HCT116 (cell line): ENCODE measurements at regions of chr17 and their contacts with region 1.

Region 1: GRCh38 chr17:55750750-55751657 is at the start of gene PCTP:
- DNase-seq: peak; percentile 86
- ATAC-seq: peak; percentile 98
- H3K4me3 ChIP-seq: peak within 1 kb of the TSS; percentile 71 to 87
- H3K27ac ChIP-seq: peak within 1 kb of the TSS; percentile 74
- H3K4me1 ChIP-seq: peaks cover 11 to 14% of the 10 kb centered on the region in 2 experiments; a peak in 3 of 4 replicates
- H3K27me3 ChIP-seq: no peaks in the 10 kb centered on the region
- CTCF ChIP-seq: peak in 2 of 3 experiments; percentile 52 to 54; a peak in 4 of 6 replicates
- POLR2A ChIP-seq: no peak
- RAD21 ChIP-seq: no peak
- total RNA-seq, gene PCTP: 16.3 TPM

Region 2: DNA sequence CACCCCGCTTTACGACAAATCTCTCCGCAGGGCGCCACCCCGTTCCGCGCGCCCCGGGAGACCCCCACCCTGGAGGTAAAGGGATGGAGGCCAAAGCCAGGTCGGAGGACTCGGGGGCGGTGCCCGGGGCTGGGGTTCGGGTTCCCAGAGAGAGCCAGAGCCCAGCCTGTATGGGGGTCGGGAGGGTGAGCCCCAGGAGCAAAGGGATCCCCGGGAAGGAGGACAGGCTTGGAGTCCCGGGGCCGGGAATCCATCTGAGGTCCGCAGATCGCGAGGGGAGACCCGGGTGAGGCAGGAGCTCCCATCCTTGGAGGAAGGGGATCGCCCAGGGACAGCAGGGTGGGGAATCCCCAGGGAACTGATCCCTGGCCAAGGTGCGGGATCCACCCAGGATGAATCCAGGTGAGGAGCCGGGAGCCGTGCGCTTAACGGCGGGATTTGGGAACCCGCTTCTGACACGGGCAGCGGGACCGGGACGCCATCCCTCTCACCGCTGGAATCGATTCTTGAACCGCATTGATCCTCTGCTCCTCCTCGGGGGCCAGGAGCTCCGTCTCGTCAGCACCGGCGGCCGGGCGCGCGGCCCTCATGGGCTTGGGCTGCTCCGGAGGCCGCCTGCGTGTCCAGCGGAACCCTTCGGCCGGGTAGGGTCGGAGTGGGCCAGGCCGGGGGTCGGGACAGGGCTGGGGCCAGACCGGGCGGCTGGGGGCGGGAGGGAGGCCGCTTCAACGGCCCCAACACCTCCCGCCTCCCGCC is 329.6 kb before region 1 on chr17 and contains the start of gene MMD:
- CTCF ChIA-PET with region 1: no interaction called
- POLR2A ChIA-PET with region 1: no interaction called
- RAD21 ChIA-PET with region 1: no interaction called
- intact Hi-C with region 1: loop called (anchors 5 kb)
- DNase-seq: no peak
- ATAC-seq: peak; percentile 51
- H3K4me3 ChIP-seq: peak within 1 kb of the TSS; percentile 81 to 82
- H3K27ac ChIP-seq: peak within 1 kb of the TSS; percentile 49
- H3K4me1 ChIP-seq: peaks cover 8 to 22% of the 10 kb centered on the region in 2 experiments; a peak in 3 of 4 replicates
- H3K27me3 ChIP-seq: peaks cover 24% of the 10 kb centered on the region
- CTCF ChIP-seq: no peak
- POLR2A ChIP-seq: no peak
- RAD21 ChIP-seq: no peak
- total RNA-seq, gene MMD: 21.3 TPM

Region 3: GRCh38 chr17:55717898-55718735 is 32.9 kb before region 1 on chr17:
- CTCF ChIA-PET with region 1: interaction called, 4 read pairs
- POLR2A ChIA-PET with region 1: no interaction called
- RAD21 ChIA-PET with region 1: no interaction called
- intact Hi-C with region 1: loop called (anchors 2 kb)
- DNase-seq: peak; percentile 65
- ATAC-seq: peak; percentile 81
- H3K4me3 ChIP-seq: no peak overlapping the region
- H3K27ac ChIP-seq: no peak overlapping the region
- H3K4me1 ChIP-seq: no peaks in the 10 kb centered on the region
- H3K27me3 ChIP-seq: peaks cover 45% of the 10 kb centered on the region
- CTCF ChIP-seq: peak; percentile 60 to 98 (median 81); a peak in 5 of 6 replicates
- POLR2A ChIP-seq: no peak
- RAD21 ChIP-seq: peak; percentile 63

Region 4: DNA sequence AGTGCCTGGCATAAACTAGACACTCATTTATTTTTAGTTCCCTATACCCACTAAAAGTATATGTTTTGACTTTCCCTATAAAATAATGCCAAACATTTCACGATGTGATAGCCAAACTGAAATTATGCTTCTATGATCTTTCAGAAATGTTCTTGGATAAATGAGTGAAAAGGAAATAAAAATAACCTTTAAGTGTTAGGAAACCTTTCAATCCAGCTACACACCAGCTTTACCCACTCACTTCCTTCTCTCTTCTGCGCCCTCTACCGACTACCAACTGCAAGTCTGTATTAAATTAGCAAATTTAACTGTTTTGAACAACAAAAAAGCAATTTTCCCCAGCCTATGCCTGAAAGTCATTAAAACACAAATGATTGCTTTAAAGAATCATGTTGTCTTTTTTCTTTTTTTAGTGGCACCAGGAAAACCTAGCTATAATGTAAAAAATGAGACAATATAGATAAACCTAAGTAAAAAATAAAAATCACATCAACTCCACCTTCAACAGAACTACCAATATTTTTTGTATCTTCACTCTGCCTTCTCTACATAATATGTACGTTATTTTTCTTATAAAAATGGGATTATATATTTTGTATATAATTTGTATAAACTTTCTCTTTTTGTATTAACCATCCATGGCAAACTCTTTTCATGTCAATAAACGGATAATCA is 15.1 kb before region 1 on chr17:
- CTCF ChIA-PET with region 1: interaction called, 20 read pairs
- POLR2A ChIA-PET with region 1: interaction called, 21 read pairs
- RAD21 ChIA-PET with region 1: interaction called in 1 of 2 experiments, 5 read pairs
- intact Hi-C with region 1: no loop called
- DNase-seq: peak; percentile 49
- ATAC-seq: peak; percentile 86
- H3K4me3 ChIP-seq: no peak overlapping the region
- H3K27ac ChIP-seq: no peak overlapping the region
- H3K4me1 ChIP-seq: peaks cover 0 to 7% of the 10 kb centered on the region in 2 experiments; a peak in 1 of 4 replicates
- H3K27me3 ChIP-seq: peaks cover 20% of the 10 kb centered on the region; the same call in 1 of the 2 replicates
- CTCF ChIP-seq: peak; percentile 62 to 97 (median 80); a peak in 5 of 6 replicates
- POLR2A ChIP-seq: no peak
- RAD21 ChIP-seq: peak; percentile 46

Region 5: DNA sequence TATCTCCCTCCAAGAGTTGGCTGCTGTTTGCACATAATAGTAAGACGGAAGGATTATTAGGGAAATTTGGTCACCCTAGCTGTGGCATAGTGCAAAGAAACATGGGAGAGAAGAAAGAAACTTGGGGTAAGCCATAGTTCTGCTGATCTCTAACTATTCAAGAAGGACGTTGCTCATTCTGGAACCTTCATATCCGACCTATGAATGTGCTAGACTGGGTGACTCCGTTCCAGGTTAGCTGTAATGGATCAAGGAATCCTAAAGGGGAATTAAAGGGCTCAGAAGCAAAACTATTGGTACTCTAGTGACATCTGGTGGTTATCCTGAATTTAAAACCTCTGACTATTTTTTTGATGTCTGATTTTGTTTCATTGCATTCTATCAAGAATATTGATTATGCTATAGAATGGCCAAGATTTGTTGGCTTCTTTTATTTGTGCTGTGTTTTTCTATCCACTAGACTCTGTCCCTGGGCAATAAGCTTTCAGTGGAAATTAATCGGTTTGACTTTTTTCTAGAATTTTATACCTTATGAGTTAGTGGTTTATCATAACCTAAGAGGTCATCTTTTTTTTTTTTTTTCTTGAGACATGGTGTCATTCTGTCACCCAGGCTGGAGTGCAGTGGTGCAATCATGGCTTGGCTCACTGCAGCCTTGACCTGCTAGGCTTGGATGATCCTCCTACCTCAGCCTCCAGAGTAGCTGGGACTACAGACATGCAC is 19.3 kb after region 1 on chr17:
- CTCF ChIA-PET with region 1: interaction called, 10 read pairs
- POLR2A ChIA-PET with region 1: no interaction called
- RAD21 ChIA-PET with region 1: no interaction called
- intact Hi-C with region 1: no loop called
- DNase-seq: peak; percentile 43
- ATAC-seq: peak; percentile 90
- H3K4me3 ChIP-seq: no peak overlapping the region
- H3K27ac ChIP-seq: no peak overlapping the region
- H3K4me1 ChIP-seq: no peaks in the 10 kb centered on the region
- H3K27me3 ChIP-seq: no peaks in the 10 kb centered on the region
- CTCF ChIP-seq: peak; percentile 48 to 83 (median 77)
- POLR2A ChIP-seq: no peak
- RAD21 ChIP-seq: peak; percentile 82

Region 6: DNA sequence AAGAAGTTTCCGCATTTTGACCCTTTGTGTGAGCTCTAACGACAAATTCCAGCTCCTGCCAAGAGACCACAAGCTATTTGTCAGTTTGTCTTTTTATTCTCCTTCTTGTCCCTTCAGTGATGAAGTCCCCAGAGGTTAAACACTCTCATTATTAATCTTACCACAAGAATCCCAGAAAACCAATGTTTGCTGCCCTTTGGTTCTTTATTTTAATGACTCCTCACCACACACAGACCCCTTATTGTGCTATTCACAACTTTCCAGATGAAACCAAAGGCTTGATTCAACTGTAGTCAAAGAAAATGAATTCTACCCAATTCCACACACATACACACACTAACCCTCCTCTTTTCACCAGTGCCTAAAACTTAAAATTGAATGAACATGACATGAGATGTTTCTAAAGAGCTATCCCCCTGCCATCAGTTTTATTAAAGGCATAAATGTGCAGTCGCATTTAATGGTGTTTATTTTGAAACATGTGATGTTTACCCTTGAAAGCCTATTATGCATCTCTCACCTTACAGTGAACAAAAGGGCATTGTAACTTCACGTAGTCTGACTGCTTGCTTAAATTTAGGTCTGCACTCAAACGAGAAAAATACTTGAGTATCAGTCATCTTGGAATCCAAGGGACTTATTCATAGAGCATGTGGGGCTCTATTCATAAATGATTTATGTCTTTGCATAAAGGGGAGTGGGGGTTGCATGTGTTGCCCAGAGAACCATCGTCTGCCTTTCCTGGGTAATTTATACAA is 43.9 kb after region 1 on chr17:
- CTCF ChIA-PET with region 1: no interaction called
- POLR2A ChIA-PET with region 1: no interaction called
- RAD21 ChIA-PET with region 1: no interaction called
- intact Hi-C with region 1: no loop called
- DNase-seq: no peak
- ATAC-seq: no peak
- H3K4me3 ChIP-seq: no peak overlapping the region
- H3K27ac ChIP-seq: no peak overlapping the region
- H3K4me1 ChIP-seq: no peaks in the 10 kb centered on the region
- H3K27me3 ChIP-seq: peaks cover 59% of the 10 kb centered on the region
- CTCF ChIP-seq: no peak
- POLR2A ChIP-seq: no peak
- RAD21 ChIP-seq: no peak

Region 7: GRCh38 chr17:55872374-55872773 is 121.4 kb after region 1 on chr17:
- CTCF ChIA-PET with region 1: no interaction called
- POLR2A ChIA-PET with region 1: no interaction called
- RAD21 ChIA-PET with region 1: no interaction called
- intact Hi-C with region 1: no loop called
- DNase-seq: no peak
- ATAC-seq: no peak
- H3K4me3 ChIP-seq: no peak overlapping the region
- H3K27ac ChIP-seq: no peak overlapping the region
- H3K4me1 ChIP-seq: no peaks in the 10 kb centered on the region
- H3K27me3 ChIP-seq: peaks cover 17% of the 10 kb centered on the region; the same call in 1 of the 2 replicates
- CTCF ChIP-seq: no peak
- POLR2A ChIP-seq: no peak
- RAD21 ChIP-seq: no peak

Region 8: DNA sequence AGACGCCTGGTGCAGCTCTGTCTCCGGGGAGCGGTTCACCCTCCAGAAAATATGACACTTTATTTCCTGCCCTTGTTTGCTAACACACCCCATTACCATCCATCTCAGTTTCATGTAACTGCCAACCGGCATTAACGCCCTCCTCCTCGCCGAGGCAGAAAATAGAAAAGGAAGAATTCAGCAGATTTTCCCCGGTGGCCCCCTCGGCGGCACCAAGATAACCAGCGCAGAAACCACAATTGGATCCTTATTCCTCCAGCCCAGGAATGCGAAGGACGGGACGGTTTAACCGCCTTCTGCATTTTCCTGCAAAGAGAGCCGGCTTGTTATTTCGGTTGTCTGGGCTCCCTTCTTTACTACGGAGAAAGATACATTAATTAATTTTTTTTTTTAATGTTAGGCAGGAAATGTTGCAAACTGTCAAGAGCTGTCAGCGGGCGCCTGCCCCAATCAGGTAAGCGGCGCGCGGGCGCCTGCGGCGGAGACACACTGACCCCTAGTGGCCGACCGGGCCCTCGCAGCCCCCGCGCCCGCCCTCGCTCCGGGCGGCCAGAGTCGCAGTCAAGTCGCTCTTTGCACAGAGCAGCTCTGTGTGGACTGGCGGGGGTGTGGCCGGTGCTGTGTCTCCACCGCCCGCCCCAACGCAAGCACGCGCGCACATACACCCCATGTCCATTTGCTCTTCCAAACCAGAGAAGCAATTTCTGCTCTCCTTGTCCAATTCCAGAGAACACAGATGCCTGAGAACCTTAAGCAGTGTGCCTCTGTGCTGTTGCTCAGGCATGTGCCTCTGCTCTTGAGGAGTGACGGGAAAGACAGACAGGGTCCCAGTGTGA is 1029.1 kb after region 1 on chr17:
- CTCF ChIA-PET with region 1: no interaction called
- POLR2A ChIA-PET with region 1: no interaction called
- RAD21 ChIA-PET with region 1: no interaction called
- intact Hi-C with region 1: loop called (anchors 10 kb)
- DNase-seq: peak; percentile 69
- ATAC-seq: peak; percentile 99
- H3K4me3 ChIP-seq: peak overlapping the region; percentile 31 to 49
- H3K27ac ChIP-seq: no peak overlapping the region
- H3K4me1 ChIP-seq: peaks cover 8 to 16% of the 10 kb centered on the region in 2 experiments; a peak in 3 of 4 replicates
- H3K27me3 ChIP-seq: peaks cover 5% of the 10 kb centered on the region; the same call in 1 of the 2 replicates
- CTCF ChIP-seq: peak; percentile 91 to 99 (median 99)
- POLR2A ChIP-seq: no peak
- RAD21 ChIP-seq: peak; percentile 98